ENCODE measurements at regions of chr19 and their contacts with region 1.

Region 1: DNA sequence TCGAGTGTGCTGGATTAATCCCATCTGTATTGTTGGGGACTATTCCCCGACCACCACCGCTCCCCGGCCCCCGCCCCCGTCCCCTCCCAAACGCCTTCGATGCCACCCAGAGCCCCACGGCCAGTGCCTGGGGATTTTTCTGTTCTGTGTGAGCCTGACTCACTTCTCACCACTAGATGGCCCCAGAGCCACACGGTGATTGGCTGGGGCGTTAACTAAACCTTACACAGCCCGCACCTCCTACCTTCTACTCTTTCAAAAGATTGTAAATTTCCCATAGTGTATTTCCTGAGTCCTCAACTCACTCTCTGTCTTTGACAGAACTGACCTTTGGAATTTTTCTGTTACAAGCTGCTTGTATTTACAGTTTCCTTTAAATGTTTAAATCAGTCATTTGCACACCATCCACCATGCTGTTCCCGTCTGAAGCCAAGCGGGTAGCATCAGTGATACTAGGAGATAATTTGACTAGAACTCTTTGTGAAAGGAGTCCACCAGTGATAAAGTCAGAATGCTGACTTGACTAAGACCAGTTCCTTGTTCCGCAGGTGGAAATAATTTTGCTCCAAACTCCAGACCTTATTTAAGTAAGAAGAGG is 61.4 kb downstream of the RFX2 start:
- DNase-seq: peak; percentile 65
- ATAC-seq: peak; percentile 99
- H3K4me3 ChIP-seq: no peak overlapping the region
- H3K27ac ChIP-seq: no peak overlapping the region
- H3K4me1 ChIP-seq: no peaks in the 10 kb centered on the region
- H3K27me3 ChIP-seq: no peaks in the 10 kb centered on the region
- CTCF ChIP-seq: peak; percentile 94
- POLR2A ChIP-seq: peak; percentile 60; the same call in 1 of the 2 replicates
- RAD21 ChIP-seq: peak; percentile 98

Region 2: DNA sequence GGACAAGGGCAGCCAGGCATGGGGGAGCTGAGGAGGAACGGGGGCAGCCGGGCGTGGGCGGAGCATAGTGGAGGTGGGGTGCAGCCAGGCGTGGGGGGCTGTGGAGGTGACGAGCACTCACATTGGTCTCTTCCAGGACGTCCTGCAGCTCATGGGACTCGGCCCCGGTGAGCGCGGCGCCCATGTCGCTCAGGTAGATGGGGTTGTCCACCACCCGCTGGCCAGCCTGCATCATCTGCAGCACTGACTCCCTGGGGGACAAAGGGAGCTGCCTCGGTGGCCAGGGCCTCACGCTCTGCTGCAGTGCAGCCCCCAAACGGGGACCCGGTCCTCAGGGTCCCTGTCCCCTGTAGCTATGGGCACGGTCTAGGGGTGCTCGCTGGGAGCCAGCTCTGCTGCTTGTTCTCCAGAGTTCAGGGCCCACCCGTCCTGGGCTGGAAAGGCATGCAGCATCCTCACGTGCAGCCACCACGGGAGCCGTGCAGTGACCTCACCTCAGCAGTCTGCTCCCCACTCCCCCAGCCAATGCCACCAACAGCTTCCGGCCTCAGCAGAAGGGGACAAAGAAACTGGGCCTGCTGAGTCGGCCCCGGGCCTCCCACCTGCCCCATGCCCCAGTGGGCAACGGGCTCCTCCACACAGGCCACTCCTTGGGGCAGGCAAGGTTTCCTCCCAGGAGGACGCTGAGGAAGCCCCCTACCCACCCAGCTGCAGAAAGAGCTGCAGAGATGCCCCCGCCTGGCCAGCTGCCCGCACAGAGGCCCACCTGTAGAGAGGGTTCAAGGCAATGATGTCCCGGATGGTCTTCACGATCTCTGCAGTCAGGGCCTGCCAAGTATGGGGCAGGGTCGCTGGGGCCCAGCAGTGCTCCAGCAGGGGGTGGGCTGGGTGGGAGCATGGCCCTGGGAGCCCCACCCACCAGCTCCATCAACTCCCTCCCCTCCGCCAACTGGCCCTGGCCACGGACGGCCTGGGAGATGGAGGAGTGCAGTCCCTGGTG is 341.0 kb before region 1 on chr19:
- CTCF ChIA-PET with region 1: no interaction called
- POLR2A ChIA-PET with region 1: no interaction called
- dilution Hi-C with region 1: no loop called
- in situ Hi-C with region 1: no loop called
- intact Hi-C with region 1: no loop called
- DNase-seq: no peak
- ATAC-seq: no peak
- H3K4me3 ChIP-seq: no peak overlapping the region
- H3K27ac ChIP-seq: no peak overlapping the region
- H3K4me1 ChIP-seq: 0 out of 2 replicates have a peak, but pooled peaks cover 2% of the 10 kb centered on the region
- H3K27me3 ChIP-seq: no peaks in the 10 kb centered on the region
- CTCF ChIP-seq: no peak
- POLR2A ChIP-seq: no peak
- RAD21 ChIP-seq: no peak

Region 3: GRCh38 chr19:5880604-5881078 is 168.3 kb before region 1 on chr19:
- CTCF ChIA-PET with region 1: no interaction called
- POLR2A ChIA-PET with region 1: no interaction called
- dilution Hi-C with region 1: no loop called
- in situ Hi-C with region 1: no loop called
- intact Hi-C with region 1: no loop called
- DNase-seq: peak; percentile 74
- ATAC-seq: peak; percentile 92
- H3K4me3 ChIP-seq: no peak overlapping the region
- H3K27ac ChIP-seq: peak overlapping the region; percentile 42; the same call in 1 of the 2 replicates
- H3K4me1 ChIP-seq: peaks cover 16% of the 10 kb centered on the region
- H3K27me3 ChIP-seq: peaks cover 2% of the 10 kb centered on the region
- CTCF ChIP-seq: no peak
- POLR2A ChIP-seq: no peak
- RAD21 ChIP-seq: no peak

Region 4: GRCh38 chr19:5987077-5987818 is 61.7 kb before region 1 on chr19:
- CTCF ChIA-PET with region 1: interaction called, 10 read pairs
- POLR2A ChIA-PET with region 1: no interaction called
- dilution Hi-C with region 1: no loop called
- in situ Hi-C with region 1: no loop called
- intact Hi-C with region 1: loop called (anchors 1 kb)
- DNase-seq: peak; percentile 77
- ATAC-seq: peak; percentile 70
- H3K4me3 ChIP-seq: no peak overlapping the region
- H3K27ac ChIP-seq: no peak overlapping the region
- H3K4me1 ChIP-seq: peaks cover 19% of the 10 kb centered on the region
- H3K27me3 ChIP-seq: no peaks in the 10 kb centered on the region
- CTCF ChIP-seq: peak; percentile 92
- POLR2A ChIP-seq: no peak
- RAD21 ChIP-seq: peak; percentile 81

Region 5: DNA sequence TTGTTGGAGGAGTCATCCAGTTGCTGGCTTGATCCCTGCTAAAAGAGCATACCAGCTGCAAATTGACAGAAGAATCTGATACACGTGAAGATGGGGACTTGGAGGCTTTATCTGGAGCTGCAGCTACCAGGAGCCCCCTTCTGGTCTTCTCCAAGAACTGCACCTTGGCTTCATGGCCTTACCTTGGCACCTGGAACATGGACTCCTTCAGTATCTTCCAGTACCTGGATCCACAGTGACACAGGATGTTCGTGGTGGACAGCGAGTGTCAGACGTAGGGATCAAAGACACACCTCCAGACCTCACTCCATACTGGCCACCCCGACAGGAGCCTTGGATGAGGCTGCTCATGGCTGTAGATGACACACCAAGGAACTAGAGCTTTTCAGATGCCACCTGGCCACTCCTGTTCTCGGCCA is 76.7 kb after region 1 on chr19:
- CTCF ChIA-PET with region 1: interaction called, 34 read pairs
- POLR2A ChIA-PET with region 1: no interaction called
- dilution Hi-C with region 1: no loop called
- in situ Hi-C with region 1: no loop called
- intact Hi-C with region 1: loop called (anchors 1 kb)
- DNase-seq: peak; percentile 77
- ATAC-seq: peak; percentile 78
- H3K4me3 ChIP-seq: no peak overlapping the region
- H3K27ac ChIP-seq: no peak overlapping the region
- H3K4me1 ChIP-seq: no peaks in the 10 kb centered on the region
- H3K27me3 ChIP-seq: no peaks in the 10 kb centered on the region
- CTCF ChIP-seq: peak; percentile 88
- POLR2A ChIP-seq: no peak
- RAD21 ChIP-seq: peak; percentile 98

Region 6: DNA sequence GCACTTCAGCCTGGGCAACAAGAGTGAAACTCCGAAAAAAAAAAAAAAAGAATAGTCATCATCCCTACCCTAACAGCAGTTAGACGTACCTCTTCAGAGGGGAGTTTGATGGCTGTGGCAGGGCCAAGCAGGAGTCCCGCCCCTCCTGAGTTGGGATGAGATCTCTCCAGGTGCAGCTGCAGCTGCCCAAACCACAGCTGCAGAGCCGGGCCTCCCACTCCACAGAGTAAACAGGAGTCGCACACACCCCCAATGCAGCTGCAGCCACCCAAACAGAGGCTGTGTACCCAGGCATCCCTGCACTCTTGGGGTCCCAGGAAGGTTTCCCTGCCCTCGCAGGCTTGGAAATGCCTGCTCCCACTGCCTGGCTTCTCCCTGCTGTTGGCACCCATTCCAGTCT is 248.3 kb after region 1 on chr19:
- CTCF ChIA-PET with region 1: no interaction called
- POLR2A ChIA-PET with region 1: no interaction called
- dilution Hi-C with region 1: no loop called
- in situ Hi-C with region 1: loop called (anchors 10 kb)
- intact Hi-C with region 1: loop called (anchors 1 kb)
- DNase-seq: no peak
- ATAC-seq: no peak
- H3K4me3 ChIP-seq: no peak overlapping the region
- H3K27ac ChIP-seq: no peak overlapping the region
- H3K4me1 ChIP-seq: no peaks in the 10 kb centered on the region
- H3K27me3 ChIP-seq: no peaks in the 10 kb centered on the region; the same call in none of the 2 replicates
- CTCF ChIP-seq: no peak
- POLR2A ChIP-seq: no peak
- RAD21 ChIP-seq: no peak

Region 7: DNA sequence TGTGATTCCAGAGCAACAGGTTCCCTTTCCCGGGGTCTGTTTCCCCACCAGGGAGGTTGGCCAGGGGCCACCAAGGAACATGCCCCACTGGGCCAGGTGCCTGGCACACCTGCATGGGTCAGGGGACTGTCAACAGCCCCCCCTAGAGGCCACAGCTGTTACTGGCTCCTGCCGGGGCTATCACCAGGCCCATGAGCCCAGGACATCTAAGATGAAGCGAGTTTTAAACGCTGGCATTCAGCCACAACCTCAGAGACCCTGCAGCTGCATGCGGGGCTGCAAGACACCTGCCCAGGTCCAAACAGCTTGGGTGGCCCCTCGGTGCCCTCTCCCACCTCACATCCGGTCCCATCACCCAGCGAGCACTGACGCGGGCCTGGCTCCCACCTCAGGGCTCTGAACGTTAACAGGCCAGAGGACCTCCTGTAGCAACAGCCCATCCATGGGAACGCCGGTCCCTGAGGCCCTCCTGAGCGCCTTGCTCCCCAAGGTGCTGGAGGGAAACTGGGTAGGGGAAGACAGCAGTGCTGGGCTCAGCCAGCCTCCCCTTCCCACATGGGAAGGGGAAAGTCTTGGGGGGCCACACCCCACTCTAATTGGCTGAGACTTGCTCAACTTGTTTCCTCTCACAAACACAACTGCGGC is 363.7 kb after region 1 on chr19:
- CTCF ChIA-PET with region 1: no interaction called
- POLR2A ChIA-PET with region 1: no interaction called
- dilution Hi-C with region 1: no loop called
- in situ Hi-C with region 1: no loop called
- intact Hi-C with region 1: loop called (anchors 10 kb)
- DNase-seq: no peak
- ATAC-seq: peak; percentile 59; the same call in 1 of the 2 replicates
- H3K4me3 ChIP-seq: no peak overlapping the region
- H3K27ac ChIP-seq: no peak overlapping the region
- H3K4me1 ChIP-seq: no peaks in the 10 kb centered on the region
- H3K27me3 ChIP-seq: no peaks in the 10 kb centered on the region
- CTCF ChIP-seq: peak; percentile 40; the same call in 1 of the 2 replicates
- POLR2A ChIP-seq: no peak
- RAD21 ChIP-seq: peak; percentile 34; the same call in 1 of the 2 replicates

Measured in IMR-90 (cell line).